Activated CD8-positive, alpha-beta T cell treated with anti-CD3 and anti-CD28 coated beads, Interleukin-2, amount 10 ng/mL, durations not matched to agents 7 days and 5 days (primary cell): ENCODE measurements at regions of chr5 and their contacts with region 1.

Region 1: GRCh38 chr5:36079200-36079761 is 12.6 kb upstream of the UGT3A2 start:
- DNase-seq: peak; percentile 52
- ATAC-seq: peak; percentile 90
- H3K4me3 Mint-ChIP-seq: no peak overlapping the region
- H3K27ac Mint-ChIP-seq: no peak overlapping the region
- H3K4me1 Mint-ChIP-seq: no peaks in the 10 kb centered on the region
- H3K27me3 Mint-ChIP-seq: peaks cover 20% of the 10 kb centered on the region

Region 2: GRCh38 chr5:36045895-36046294 is 33.4 kb before region 1 on chr5:
- CTCF ChIA-PET with region 1: no interaction called
- POLR2A ChIA-PET with region 1: no interaction called
- DNase-seq: no peak
- ATAC-seq: no peak
- H3K4me3 Mint-ChIP-seq: no peak overlapping the region
- H3K27ac Mint-ChIP-seq: no peak overlapping the region
- H3K4me1 Mint-ChIP-seq: no peaks in the 10 kb centered on the region
- H3K27me3 Mint-ChIP-seq: peaks cover 6% of the 10 kb centered on the region

Region 3: GRCh38 chr5:36089989-36090564 is 10.8 kb after region 1 on chr5:
- CTCF ChIA-PET with region 1: interaction called, 25 read pairs
- POLR2A ChIA-PET with region 1: interaction called, 3 read pairs
- DNase-seq: no peak
- ATAC-seq: peak; percentile 42
- H3K4me3 Mint-ChIP-seq: no peak overlapping the region
- H3K27ac Mint-ChIP-seq: no peak overlapping the region
- H3K4me1 Mint-ChIP-seq: no peaks in the 10 kb centered on the region
- H3K27me3 Mint-ChIP-seq: peaks cover 18% of the 10 kb centered on the region

Region 4: GRCh38 chr5:36151434-36152323 is 72.4 kb after region 1 on chr5 and contains the starts of genes LMBRD2 and SKP2:
- CTCF ChIA-PET with region 1: interaction called, 19 read pairs
- POLR2A ChIA-PET with region 1: interaction called, 4 read pairs
- DNase-seq: peak; percentile 99
- ATAC-seq: peak; percentile 98
- H3K4me3 Mint-ChIP-seq: peak within 1 kb of the TSS; percentile 93
- H3K27ac Mint-ChIP-seq: peak within 1 kb of the TSS; percentile 83
- H3K4me1 Mint-ChIP-seq: peaks cover 54% of the 10 kb centered on the region
- H3K27me3 Mint-ChIP-seq: no peaks in the 10 kb centered on the region
- total RNA-seq, gene LMBRD2: 11.5 to 11.8 TPM
- total RNA-seq, gene SKP2: 54.6 to 61.4 TPM

Region 5: DNA sequence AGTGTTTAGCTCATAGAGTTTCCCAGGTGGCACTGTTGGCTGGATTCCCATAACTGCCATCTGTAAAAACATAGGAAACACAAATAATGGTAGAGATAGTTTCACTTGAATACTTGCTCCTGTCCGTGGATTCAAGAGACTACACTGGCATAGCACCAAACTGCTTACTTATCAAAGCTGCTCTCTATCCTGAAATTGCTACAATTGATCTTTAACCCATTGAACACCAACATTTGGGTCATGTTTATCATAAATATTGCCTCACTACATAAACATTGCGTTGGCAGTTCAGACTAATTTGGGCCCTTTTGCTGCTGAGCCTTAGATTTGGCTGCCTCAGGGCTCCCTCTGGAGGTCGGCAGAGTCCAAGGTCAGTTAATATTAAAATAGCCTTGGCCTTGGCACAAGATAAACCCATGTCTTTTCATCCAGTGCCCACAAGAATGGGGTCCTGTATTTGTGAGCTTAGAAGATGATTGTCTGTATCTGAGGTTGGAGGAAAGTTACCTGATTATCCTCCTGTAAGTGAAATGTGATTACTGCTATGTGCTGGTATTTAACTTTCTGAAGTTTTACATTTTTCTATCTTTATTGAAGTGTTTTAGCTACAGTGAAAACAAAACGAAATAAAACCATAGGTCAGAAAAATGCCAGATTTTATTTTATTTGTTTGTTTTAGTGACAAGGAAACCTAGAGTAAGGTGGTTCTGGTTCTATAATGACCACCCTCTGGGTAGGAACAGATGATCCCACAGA is 226.5 kb after region 1 on chr5:
- CTCF ChIA-PET with region 1: interaction called, 15 read pairs
- POLR2A ChIA-PET with region 1: no interaction called
- DNase-seq: peak; percentile 26
- ATAC-seq: peak; percentile 47
- H3K4me3 Mint-ChIP-seq: no peak overlapping the region
- H3K27ac Mint-ChIP-seq: no peak overlapping the region
- H3K4me1 Mint-ChIP-seq: no peaks in the 10 kb centered on the region
- H3K27me3 Mint-ChIP-seq: peaks cover 7% of the 10 kb centered on the region